ENCODE measurements at regions of chr2 and their contacts with region 1.

Region 1: GRCh38 chr2:80169811-80170594 is 134.5 kb downstream of the LRRTM1 start:
- DNase-seq: no peak

Region 2: DNA sequence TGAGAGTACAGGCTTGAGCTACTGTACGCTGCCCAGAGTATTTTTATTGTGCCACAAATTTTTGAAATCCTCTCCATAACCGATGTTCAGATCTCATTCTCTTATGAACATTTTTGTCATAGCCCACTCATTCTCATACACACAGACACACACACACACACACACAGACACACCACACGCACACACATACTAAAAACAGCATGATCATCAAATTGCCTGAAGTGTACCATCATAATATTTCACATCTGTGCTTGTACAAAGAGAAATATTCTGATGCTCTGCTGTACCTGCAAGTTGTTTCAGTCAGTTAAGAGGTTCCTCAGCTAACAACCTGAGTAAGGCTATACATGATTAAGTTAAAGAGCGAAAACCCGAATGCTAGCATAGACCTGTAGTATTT is 39.5 kb after region 1 on chr2:
- intact Hi-C with region 1: loop called in 1 of 2 experiments (anchors 2 kb)
- DNase-seq: no peak

Measured in posterior vena cava (tissue), 2 donors.